Mammary epithelial cell (primary cell): ENCODE measurements at regions of chr11 and their contacts with region 1.

Region 1: DNA sequence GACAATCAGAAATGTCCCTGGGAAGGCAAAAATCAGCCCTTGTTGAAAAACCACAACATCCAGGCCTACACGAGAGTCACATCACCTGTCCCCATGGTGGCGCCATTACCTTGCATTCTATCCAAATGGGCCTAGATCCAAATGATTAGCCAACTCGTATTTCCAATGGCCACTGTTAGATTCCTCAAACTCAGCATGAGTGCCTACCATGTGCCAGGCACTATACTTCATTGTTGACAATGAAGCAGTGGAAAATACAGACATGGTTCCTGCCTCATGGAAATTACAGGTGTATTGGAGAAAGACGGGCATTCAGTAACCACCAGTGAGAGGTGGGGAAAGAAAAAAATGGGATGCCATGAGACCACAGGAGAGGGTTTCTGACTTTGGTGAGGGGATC is 29.8 kb upstream of the CREB3L1 start:
- DNase-seq: peak; percentile 66
- H3K4me3 ChIP-seq: no peak overlapping the region
- H3K27ac ChIP-seq: no peak overlapping the region
- H3K4me1 ChIP-seq: peaks cover 26% of the 10 kb centered on the region
- H3K27me3 ChIP-seq: no peaks in the 10 kb centered on the region
- CTCF ChIP-seq: peak; percentile 54 to 70

Region 2: GRCh38 chr11:46315033-46315738 is 67.5 kb after region 1 on chr11:
- CTCF ChIA-PET with region 1: no interaction called
- dilution Hi-C with region 1: loop called (anchors 5 kb)
- in situ Hi-C with region 1: loop called in 1 of 2 experiments (anchors 5 kb)
- intact Hi-C with region 1: loop called (anchors 1 kb)
- DNase-seq: peak; percentile 58
- H3K4me3 ChIP-seq: no peak overlapping the region
- H3K27ac ChIP-seq: no peak overlapping the region
- H3K4me1 ChIP-seq: no peaks in the 10 kb centered on the region
- H3K27me3 ChIP-seq: no peaks in the 10 kb centered on the region
- CTCF ChIP-seq: peak; percentile 90 to 95

Region 3: DNA sequence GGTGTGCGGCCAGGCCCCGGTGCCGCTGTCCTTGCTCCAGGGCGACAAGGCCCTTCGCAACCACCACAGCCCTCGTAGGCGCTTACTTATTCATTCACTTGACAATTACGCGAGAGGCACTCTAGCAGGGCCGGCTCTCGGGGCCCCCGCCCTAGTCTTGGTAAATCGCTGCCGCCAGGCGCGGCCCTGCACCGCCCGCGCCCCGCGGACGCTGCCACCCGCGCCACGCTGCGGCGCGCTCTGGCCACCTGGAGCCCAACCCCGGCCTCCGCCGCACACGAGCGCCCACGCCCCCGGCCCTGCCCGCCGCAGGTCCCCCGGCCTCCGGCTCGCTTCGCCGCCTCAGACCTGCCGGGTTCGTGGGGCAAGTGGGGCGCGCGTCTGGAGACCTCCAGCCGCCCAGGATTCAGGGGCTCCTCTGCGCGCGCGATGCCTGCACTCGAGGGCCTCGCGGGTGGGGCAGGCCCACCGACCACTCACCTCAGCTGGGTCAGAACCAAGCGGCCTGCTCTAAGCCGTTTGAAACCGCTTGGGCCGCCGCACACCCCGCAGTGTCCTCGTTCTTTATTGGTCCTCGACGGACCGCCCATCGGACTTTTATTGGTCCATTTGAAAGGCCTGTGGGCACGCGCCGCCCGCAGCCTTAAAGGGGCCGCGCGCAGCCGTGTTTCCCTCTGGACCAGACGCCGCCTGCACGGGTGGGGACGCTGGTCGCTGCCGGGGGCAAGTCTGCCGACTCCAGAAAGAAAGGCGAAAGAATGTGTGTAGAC is 598.3 kb after region 1 on chr11 and contains the start of gene CKAP5:
- CTCF ChIA-PET with region 1: no interaction called
- dilution Hi-C with region 1: no loop called
- in situ Hi-C with region 1: no loop called
- intact Hi-C with region 1: no loop called
- DNase-seq: peak; percentile 86
- H3K4me3 ChIP-seq: peak within 1 kb of the TSS; percentile 77 to 90 (median 87)
- H3K27ac ChIP-seq: peak within 1 kb of the TSS; percentile 56
- H3K4me1 ChIP-seq: peaks cover 4% of the 10 kb centered on the region
- H3K27me3 ChIP-seq: no peaks in the 10 kb centered on the region
- CTCF ChIP-seq: no peak
- total RNA-seq, gene CKAP5: 60.3 to 128 TPM